K562 (cell line): ENCODE measurements at regions of chr18 and their contacts with region 1.

Region 1: DNA sequence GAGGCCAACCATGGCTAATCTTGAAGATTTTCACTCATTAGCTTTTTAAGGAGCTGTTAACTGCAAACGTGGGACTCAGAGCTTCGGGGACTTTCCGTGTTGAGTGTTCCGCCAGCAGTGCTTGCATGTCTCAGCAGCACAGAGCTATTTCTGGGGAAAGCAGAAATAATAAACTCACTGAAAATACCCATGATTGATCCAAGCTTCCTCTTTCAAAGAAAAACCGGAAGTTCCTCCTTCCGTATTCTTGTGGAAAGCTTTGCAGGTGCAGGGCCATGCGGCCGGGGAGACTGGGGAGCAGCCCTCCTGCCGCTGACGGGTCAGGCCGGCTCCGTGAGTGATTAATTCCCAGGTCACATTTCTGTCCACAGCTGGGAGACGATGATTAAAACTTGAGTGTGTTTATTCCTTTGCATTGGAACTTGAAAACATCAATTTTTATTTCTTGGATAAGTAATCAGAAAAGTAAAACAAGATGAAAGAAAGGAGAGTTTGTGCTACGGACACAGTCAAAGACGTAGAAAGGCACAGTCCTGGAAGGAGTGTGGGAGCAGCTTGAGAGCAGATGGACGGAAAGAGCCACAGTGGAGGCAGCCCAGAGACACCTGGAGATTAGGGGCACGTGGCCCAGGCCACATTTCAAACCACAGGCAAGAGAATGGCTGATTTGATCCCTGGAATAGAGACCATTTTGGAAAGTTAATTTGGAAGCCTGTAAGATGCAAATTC is 54.2 kb upstream of the CTDP1 start:
- DNase-seq: no peak
- ATAC-seq: no peak
- H3K4me3 ChIP-seq: no peak overlapping the region
- H3K27ac ChIP-seq: no peak overlapping the region
- H3K4me1 ChIP-seq: peaks cover 6 to 19% of the 10 kb centered on the region in 2 experiments; a peak in 3 of 5 replicates
- H3K27me3 ChIP-seq: peaks cover 22 to 47% of the 10 kb centered on the region in 2 experiments; a peak in 4 of 5 replicates
- CTCF ChIP-seq: no peak
- EP300 ChIP-seq: no peak
- POLR2A ChIP-seq: no peak
- RAD21 ChIP-seq: no peak

Region 2: GRCh38 chr18:79523736-79524180 is 101.6 kb before region 1 on chr18:
- CTCF ChIA-PET with region 1: no interaction called
- POLR2A ChIA-PET with region 1: no interaction called
- in situ Hi-C with region 1: no loop called
- intact Hi-C with region 1: no loop called
- DNase-seq: no peak
- ATAC-seq: no peak
- H3K4me3 ChIP-seq: no peak overlapping the region
- H3K27ac ChIP-seq: no peak overlapping the region
- H3K4me1 ChIP-seq: peaks cover 0 to 36% of the 10 kb centered on the region in 2 experiments; a peak in 3 of 5 replicates
- H3K27me3 ChIP-seq: no peaks in the 10 kb centered on the region
- CTCF ChIP-seq: no peak
- EP300 ChIP-seq: no peak
- POLR2A ChIP-seq: no peak
- RAD21 ChIP-seq: no peak

Region 3: DNA sequence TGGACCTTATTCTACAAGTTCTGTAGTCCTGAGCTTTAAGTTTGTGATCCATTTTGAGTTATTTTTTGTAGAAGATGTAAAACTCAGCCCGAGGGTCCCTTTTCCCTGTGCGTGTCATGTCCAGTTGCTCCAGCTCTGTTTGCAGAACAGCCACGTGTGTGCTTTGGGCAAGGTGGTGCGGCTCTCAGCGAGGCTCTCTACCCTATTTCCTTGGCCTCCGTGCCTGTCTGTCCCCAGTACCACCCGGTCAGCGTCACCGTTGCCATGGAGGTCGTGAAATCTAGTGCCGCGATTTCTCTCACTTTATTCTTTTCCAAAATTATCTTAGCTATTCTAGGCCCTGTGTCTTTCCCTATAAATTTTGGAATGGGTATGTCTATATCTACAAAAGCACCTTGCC is 86.7 kb before region 1 on chr18:
- CTCF ChIA-PET with region 1: no interaction called
- POLR2A ChIA-PET with region 1: no interaction called
- in situ Hi-C with region 1: no loop called
- intact Hi-C with region 1: loop called (anchors 5 kb)
- DNase-seq: no peak
- ATAC-seq: no peak
- H3K4me3 ChIP-seq: no peak overlapping the region
- H3K27ac ChIP-seq: no peak overlapping the region
- H3K4me1 ChIP-seq: no peaks in the 10 kb centered on the region
- H3K27me3 ChIP-seq: peaks cover 0 to 25% of the 10 kb centered on the region in 2 experiments; a peak in 4 of 5 replicates
- CTCF ChIP-seq: no peak
- EP300 ChIP-seq: no peak
- POLR2A ChIP-seq: no peak
- RAD21 ChIP-seq: no peak

Region 4: DNA sequence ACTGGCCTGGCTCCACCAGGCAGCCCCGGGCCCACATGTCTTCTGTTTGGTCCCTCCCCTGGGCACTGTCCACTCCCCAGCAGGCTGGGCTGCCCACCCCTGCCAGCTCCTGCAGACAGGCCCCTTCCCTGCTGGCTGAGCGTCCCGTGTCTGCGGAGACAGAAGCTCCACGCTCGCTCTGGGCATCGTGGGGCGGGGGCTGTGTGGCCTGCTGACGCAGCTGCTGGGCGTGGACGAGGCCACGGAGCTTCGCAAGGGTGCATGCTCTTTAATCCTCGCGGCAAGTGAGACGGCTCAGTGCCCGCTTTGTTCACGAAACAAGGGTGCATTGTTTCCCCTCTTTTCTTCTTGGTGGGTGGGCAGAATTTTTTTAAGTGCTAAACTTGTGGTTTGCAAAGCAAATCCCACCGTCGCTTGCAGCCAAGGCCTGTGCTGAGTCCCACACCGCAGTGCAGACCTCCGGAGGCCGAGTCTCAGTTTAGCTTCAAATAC is 78.5 kb before region 1 on chr18:
- CTCF ChIA-PET with region 1: no interaction called
- POLR2A ChIA-PET with region 1: no interaction called
- in situ Hi-C with region 1: loop called (anchors 5 kb)
- intact Hi-C with region 1: no loop called
- DNase-seq: no peak
- ATAC-seq: no peak
- H3K4me3 ChIP-seq: no peak overlapping the region
- H3K27ac ChIP-seq: no peak overlapping the region
- H3K4me1 ChIP-seq: peaks cover 0 to 6% of the 10 kb centered on the region in 2 experiments; a peak in 2 of 5 replicates
- H3K27me3 ChIP-seq: peaks cover 11 to 42% of the 10 kb centered on the region in 2 experiments; a peak in 3 of 5 replicates
- CTCF ChIP-seq: no peak
- EP300 ChIP-seq: no peak
- POLR2A ChIP-seq: no peak
- RAD21 ChIP-seq: no peak

Region 5: DNA sequence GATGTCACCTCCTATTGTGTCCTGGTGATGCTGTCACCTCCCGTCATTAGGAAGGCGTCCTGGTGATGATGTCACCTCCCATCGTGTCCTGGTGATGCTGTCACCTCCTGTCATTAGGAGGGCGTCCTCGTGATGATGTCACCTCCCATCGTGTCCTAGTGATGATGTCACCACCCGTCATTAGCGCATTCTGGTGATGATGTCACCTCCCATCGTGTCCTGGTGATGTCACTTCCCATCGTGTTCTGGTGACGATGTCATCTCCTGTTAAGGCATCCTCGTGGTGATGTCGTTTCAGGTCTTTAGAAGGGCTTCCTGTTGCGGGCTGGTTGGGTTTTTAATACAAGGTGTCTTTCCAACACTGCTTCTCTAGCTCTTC is 95.0 kb after region 1 on chr18:
- CTCF ChIA-PET with region 1: no interaction called
- POLR2A ChIA-PET with region 1: no interaction called
- in situ Hi-C with region 1: no loop called
- intact Hi-C with region 1: no loop called
- DNase-seq: peak in 1 of 4 experiments; percentile 5
- ATAC-seq: no peak
- H3K4me3 ChIP-seq: no peak overlapping the region
- H3K27ac ChIP-seq: no peak overlapping the region; the same call in 2 of the 3 replicates
- H3K4me1 ChIP-seq: no peaks in the 10 kb centered on the region
- H3K27me3 ChIP-seq: no peaks in the 10 kb centered on the region
- CTCF ChIP-seq: no peak
- EP300 ChIP-seq: no peak
- POLR2A ChIP-seq: no peak
- RAD21 ChIP-seq: no peak